ENCODE measurements at regions of chr19 and their contacts with region 1.

Region 1: DNA sequence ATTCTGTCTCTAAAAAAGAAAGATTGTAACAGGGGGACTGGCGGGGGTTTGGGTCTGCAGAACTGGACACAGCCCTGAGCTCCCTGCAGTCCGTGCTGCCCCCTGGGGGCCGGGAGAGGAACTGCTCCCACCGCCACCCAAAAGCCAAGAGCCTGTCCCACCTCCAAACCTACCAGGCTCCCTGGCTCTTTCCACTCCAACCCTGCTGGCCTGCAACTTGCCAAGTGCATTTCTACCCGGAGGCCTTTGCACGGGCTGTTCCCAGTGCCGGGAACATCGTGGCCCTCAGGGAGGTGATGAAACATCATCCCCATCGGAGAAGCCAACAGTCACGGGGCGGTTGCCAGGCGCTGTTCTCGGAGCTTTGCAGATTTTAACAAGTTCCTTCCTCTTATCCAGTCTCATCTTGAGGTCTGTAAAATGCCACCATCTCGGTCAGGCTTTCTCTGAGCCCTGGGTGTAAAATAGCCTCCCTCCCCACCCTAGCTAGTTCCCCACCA is 50.7 kb downstream of the SMIM24 start:
- DNase-seq: peak in 1 of 2 experiments; percentile 61
- H3K4me3 ChIP-seq: no peak overlapping the region
- H3K27ac ChIP-seq: no peak overlapping the region
- H3K4me1 ChIP-seq: no peaks in the 10 kb centered on the region
- H3K27me3 ChIP-seq: no peaks in the 10 kb centered on the region
- CTCF ChIP-seq: peak; percentile 81

Region 2: GRCh38 chr19:3387645-3388589 is 41.7 kb before region 1 on chr19:
- CTCF ChIA-PET with region 1: no interaction called
- POLR2A ChIA-PET with region 1: interaction called, 28 read pairs
- intact Hi-C with region 1: no loop called
- DNase-seq: peak in 1 of 2 experiments; percentile 80
- H3K4me3 ChIP-seq: no peak overlapping the region
- H3K27ac ChIP-seq: no peak overlapping the region
- H3K4me1 ChIP-seq: no peaks in the 10 kb centered on the region
- H3K27me3 ChIP-seq: no peaks in the 10 kb centered on the region
- CTCF ChIP-seq: no peak

Region 3: DNA sequence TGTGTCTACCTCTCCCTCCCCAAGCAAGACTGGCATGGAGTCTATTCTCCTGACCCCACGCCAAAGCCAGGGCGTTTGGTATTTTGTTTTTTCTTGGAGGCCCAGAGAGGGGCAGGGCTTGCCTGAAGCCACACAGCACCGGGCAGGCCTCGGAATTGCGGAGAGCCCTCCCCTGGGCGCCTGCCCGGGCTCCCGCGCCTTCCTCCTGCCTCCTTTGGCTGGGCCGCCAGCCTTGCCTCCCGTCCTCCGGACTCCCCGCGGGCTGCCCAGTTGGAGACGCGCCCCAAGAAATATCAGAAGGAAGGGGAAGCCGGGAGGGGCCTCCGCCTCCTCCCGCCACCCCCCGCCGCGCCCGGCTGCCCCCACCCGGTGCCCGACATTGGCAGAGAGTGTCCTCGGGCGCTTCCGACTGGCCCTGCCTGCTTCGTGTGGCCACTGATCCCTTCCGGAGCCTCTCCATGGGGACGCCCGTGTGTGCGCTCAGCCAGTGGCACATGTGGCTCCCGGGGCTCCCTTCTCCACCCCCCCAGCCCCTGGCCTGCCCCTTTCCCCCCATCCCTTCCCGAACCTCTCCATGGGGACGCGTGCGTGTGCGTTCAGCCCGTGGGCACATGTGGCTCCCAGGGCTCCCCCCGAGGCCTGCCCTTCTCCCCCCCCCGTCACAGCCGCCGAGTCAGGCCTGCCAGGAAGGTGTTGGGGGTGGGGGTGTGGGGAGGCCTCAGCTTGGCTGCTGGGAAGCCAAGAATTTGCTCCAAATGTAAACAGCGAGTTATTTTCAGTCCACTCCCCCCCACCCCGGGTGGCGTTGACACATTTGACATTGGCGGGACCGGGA is 25.9 kb before region 1 on chr19:
- CTCF ChIA-PET with region 1: no interaction called
- POLR2A ChIA-PET with region 1: no interaction called
- intact Hi-C with region 1: no loop called
- DNase-seq: no peak
- H3K4me3 ChIP-seq: no peak overlapping the region
- H3K27ac ChIP-seq: no peak overlapping the region
- H3K4me1 ChIP-seq: no peaks in the 10 kb centered on the region
- H3K27me3 ChIP-seq: no peaks in the 10 kb centered on the region
- CTCF ChIP-seq: no peak